Cardiac septum (tissue), 1 donor: ENCODE measurements at regions of chr1 and their contacts with region 1.

Region 1: GRCh38 chr1:24070821-24071393 is 41.0 kb downstream of the MYOM3 start:
- DNase-seq: peak; percentile 83

Region 2: DNA sequence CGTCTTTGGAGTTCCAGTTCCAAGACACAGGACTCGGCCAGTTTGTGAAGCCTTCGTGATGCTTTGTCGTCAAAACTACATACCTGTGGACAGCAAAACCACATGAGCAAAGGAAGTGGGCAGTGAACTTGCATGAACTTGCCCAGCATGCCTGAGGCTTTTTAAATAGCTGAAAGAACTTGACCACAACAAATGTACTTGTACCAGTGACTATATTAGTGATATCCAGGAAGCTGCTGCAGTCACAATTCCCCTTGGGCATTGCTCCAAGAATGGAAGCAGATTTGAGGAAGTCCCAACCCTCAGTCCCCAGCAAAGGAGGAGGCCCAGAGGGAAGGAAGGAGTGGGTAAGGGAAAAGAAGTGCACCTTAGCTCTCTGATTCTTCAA is 205.4 kb before region 1 on chr1:
- intact Hi-C with region 1: no loop called
- DNase-seq: no peak

Region 3: GRCh38 chr1:24036088-24036487 is 34.8 kb before region 1 on chr1:
- intact Hi-C with region 1: no loop called
- DNase-seq: no peak

Region 4: DNA sequence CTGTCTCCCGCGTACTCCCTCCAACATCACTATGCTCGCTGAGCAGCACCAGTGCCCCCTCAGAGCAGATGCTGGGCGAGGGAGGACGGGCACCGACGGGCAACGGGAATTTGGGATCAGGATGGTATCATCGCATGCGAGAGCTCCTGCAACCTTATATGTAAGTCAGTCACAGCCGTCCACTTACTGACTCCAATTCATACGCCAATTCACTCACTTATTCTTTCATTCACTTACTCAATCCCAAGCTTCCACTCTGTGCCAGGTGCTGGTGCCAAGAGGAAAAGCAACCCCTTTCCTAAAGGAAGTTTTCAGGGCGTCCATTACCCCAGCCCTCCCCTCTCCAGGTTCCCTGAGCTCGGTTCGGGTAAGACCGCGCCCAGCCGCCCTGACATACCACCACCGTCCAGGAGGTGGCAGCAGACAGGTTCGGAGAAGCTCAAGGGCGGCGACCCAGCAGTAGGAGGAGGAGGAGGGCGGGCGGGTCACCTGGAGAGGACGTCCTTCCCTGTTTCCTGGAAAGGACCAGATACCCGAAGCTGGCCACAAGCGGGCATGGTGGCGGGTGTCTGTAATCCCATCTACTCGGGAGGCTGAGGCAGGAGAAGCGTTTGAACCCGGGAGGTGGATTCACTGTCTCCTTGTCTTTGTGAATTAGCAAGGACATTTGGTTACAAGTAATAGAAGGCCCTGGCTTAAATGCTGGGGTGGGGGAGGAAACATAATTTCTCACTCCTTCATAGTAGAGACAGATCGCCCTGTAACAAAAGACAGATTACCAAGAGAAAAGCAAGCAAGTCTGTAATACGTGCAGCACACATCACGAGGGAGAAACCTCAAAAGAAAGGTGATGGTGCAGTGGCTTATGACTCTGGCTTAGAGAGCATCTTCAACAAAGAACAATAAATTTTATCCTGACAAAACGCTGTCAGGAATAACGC is 79.6 kb after region 1 on chr1:
- intact Hi-C with region 1: loop called (anchors 5 kb)
- DNase-seq: peak; percentile 95